ENCODE measurements at regions of chr4 and their contacts with region 1.

Region 1: GRCh38 chr4:36128689-36129088 is 115.6 kb downstream of the ARAP2 start:
- DNase-seq: no peak
- ATAC-seq: no peak
- H3K4me3 ChIP-seq: no peak overlapping the region
- H3K4me3 Mint-ChIP-seq: no peak overlapping the region
- H3K27ac ChIP-seq: no peak overlapping the region
- H3K27ac Mint-ChIP-seq: no peak overlapping the region
- H3K4me1 ChIP-seq: no peaks in the 10 kb centered on the region
- H3K4me1 Mint-ChIP-seq: no peaks in the 10 kb centered on the region
- H3K27me3 ChIP-seq: no peaks in the 10 kb centered on the region
- H3K27me3 Mint-ChIP-seq: no peaks in the 10 kb centered on the region
- CTCF ChIP-seq: no peak

Region 2: GRCh38 chr4:36111172-36111571 is 17.5 kb before region 1 on chr4:
- CTCF ChIA-PET with region 1: interaction called, 5 read pairs
- POLR2A ChIA-PET with region 1: no interaction called
- intact Hi-C with region 1: loop called in 1 of 2 experiments (anchors 2 kb)
- DNase-seq: no peak
- ATAC-seq: no peak
- H3K4me3 ChIP-seq: no peak overlapping the region
- H3K4me3 Mint-ChIP-seq: no peak overlapping the region
- H3K27ac ChIP-seq: no peak overlapping the region
- H3K27ac Mint-ChIP-seq: no peak overlapping the region
- H3K4me1 ChIP-seq: no peaks in the 10 kb centered on the region
- H3K4me1 Mint-ChIP-seq: no peaks in the 10 kb centered on the region
- H3K27me3 ChIP-seq: no peaks in the 10 kb centered on the region
- H3K27me3 Mint-ChIP-seq: no peaks in the 10 kb centered on the region
- CTCF ChIP-seq: no peak

Measured in CD4-positive, alpha-beta T cell (primary cell).